Breast epithelium (tissue), 4 donors: ENCODE measurements at regions of chr7 and their contacts with region 1.

Region 1: GRCh38 chr7:32179567-32179966 is 109.4 kb upstream of the PDE1C start:
- DNase-seq: no peak
- H3K4me3 ChIP-seq: no peak overlapping the region
- H3K27ac ChIP-seq: no peak overlapping the region
- H3K4me1 ChIP-seq: no peaks in the 10 kb centered on the region
- H3K27me3 ChIP-seq: no peaks in the 10 kb centered on the region
- CTCF ChIP-seq: no peak
- POLR2A ChIP-seq: no peak

Region 2: DNA sequence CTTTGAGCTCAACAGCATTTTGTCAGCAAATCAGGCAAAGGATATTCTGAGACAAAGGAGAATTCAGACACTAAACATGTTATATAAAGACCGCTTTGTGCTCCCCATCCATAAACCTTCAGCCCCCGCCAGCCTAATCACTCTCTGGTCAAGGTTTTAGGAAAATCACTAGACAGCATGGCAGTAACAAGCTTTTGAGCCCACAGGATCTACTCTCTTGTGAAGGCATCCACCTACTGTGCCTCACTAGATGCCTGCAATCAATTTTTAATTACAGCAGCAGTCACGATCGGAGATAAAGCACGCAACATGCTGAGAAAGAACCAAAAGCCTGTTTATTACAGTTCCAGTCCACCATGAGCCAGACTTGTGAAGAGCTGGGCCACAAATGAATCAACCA is 128.4 kb before region 1 on chr7:
- intact Hi-C with region 1: loop called (anchors 5 kb)
- DNase-seq: no peak
- H3K4me3 ChIP-seq: no peak overlapping the region
- H3K27ac ChIP-seq: no peak overlapping the region
- H3K4me1 ChIP-seq: no peaks in the 10 kb centered on the region
- H3K27me3 ChIP-seq: no peaks in the 10 kb centered on the region
- CTCF ChIP-seq: no peak
- POLR2A ChIP-seq: no peak